ENCODE measurements at regions of chr14 and their contacts with region 1.

Region 1: DNA sequence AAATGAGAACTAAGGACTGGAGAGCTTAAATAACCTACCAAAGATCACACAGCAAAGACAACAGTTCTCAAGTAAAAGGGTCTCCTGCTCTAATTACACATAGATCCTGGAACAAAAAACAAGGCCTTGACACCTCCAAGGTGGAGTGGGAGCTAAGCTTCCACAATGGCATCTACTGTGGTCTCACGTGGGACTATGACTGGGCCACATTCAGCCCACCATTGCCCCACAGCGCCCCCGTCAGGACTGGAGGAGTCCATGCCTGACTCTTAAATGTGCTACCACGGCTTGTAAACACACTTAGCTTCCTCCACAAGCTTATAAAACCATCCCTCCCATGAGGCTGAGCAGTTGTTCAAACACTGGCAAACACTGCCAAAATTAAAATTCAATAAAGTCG is 88.5 kb downstream of the GCH1 start:
- DNase-seq: no peak
- ATAC-seq: no peak
- H3K4me3 ChIP-seq: no peak overlapping the region
- H3K27ac ChIP-seq: no peak overlapping the region
- H3K4me1 ChIP-seq: no peaks in the 10 kb centered on the region
- H3K27me3 ChIP-seq: no peaks in the 10 kb centered on the region
- CTCF ChIP-seq: no peak

Region 2: GRCh38 chr14:54435500-54435981 is 378.5 kb before region 1 on chr14:
- intact Hi-C with region 1: no loop called
- DNase-seq: no peak
- ATAC-seq: no peak
- H3K4me3 ChIP-seq: no peak overlapping the region
- H3K27ac ChIP-seq: peak overlapping the region in 4 of 10 donors; percentile 17 to 46 (median 26)
- H3K4me1 ChIP-seq: peaks cover 0 to 81% (median 57%) of the 10 kb centered on the region in 9 donors
- H3K27me3 ChIP-seq: no peaks in the 10 kb centered on the region
- CTCF ChIP-seq: no peak

Region 3: GRCh38 chr14:54839701-54840119 is 25.6 kb after region 1 on chr14:
- intact Hi-C with region 1: loop called in 1 of 10 experiments (anchors 2 kb)
- DNase-seq: no peak
- ATAC-seq: peak in 3 of 8 donors; percentile 35 to 64 (median 51)
- H3K4me3 ChIP-seq: no peak overlapping the region
- H3K27ac ChIP-seq: peak overlapping the region in 1 of 10 donors; percentile 5
- H3K4me1 ChIP-seq: no peaks in the 10 kb centered on the region
- H3K27me3 ChIP-seq: no peaks in the 10 kb centered on the region
- CTCF ChIP-seq: no peak

Measured in heart right ventricle (tissue), 16 donors.